ENCODE measurements at regions of chr1 and their contacts with region 1.

Region 1: GRCh38 chr1:175146529-175147213 is 45.9 kb downstream of the KIAA0040 start:
- ATAC-seq: peak; percentile 75 to 90 (median 88)
- H3K4me3 ChIP-seq: no peak overlapping the region
- H3K27ac ChIP-seq: no peak overlapping the region
- H3K4me1 ChIP-seq: peaks cover 3 to 7% of the 10 kb centered on the region in 2 donors

Region 2: DNA sequence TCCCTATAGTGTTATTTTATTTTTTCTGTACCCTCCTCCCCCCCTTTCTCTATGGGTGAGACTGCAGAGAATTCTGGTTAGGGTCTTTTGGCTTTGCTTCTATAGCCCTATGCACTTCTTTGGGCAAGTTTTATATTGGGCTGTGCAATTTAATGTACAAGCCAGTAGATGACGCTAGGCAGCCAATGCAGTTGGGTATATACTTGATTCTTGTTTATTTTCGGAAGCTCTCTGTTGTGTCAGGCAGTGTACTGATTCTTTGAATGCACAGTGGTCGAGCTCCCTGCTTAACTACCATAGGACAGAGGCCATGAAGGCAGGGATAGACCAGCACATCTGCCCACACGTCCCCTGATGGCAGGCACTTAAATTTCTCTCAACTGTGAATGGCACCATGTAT is 733.0 kb before region 1 on chr1:
- in situ Hi-C with region 1: no loop called
- ATAC-seq: peak in 2 of 8 experiments; percentile 59 to 85
- H3K4me3 ChIP-seq: no peak overlapping the region
- H3K27ac ChIP-seq: no peak overlapping the region
- H3K4me1 ChIP-seq: no peaks in the 10 kb centered on the region

Region 3: DNA sequence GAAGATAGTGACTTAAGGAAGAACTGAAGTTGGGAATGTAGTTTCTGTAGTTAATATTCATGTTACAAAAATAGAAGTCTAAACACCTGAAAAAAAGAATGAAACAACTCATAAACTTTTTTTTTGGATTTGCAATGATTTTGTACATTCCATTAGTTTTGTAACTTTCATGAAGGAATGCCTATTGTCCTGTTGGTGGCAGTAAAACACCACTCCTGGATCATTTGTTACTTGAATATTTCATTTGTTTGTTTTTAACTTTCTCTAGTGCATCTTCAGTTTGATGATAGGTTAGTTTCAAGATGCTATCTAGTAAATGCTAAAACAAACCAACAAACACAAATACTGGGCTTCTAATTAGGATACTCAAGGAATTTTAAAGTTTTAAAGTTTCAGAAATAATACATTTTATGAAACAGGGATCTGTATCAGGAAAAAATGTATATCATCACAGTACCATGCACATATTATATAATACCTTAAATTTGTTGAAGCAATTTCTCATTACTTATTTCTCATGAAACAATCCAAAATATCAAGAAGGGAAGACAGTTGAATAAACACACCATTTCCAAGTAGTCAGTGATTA is 376.6 kb before region 1 on chr1:
- in situ Hi-C with region 1: loop called in 1 of 9 experiments (anchors 25 kb)
- ATAC-seq: peak in 4 of 8 experiments; percentile 47 to 63 (median 50)
- H3K4me3 ChIP-seq: no peak overlapping the region
- H3K27ac ChIP-seq: no peak overlapping the region
- H3K4me1 ChIP-seq: no peaks in the 10 kb centered on the region

Region 4: DNA sequence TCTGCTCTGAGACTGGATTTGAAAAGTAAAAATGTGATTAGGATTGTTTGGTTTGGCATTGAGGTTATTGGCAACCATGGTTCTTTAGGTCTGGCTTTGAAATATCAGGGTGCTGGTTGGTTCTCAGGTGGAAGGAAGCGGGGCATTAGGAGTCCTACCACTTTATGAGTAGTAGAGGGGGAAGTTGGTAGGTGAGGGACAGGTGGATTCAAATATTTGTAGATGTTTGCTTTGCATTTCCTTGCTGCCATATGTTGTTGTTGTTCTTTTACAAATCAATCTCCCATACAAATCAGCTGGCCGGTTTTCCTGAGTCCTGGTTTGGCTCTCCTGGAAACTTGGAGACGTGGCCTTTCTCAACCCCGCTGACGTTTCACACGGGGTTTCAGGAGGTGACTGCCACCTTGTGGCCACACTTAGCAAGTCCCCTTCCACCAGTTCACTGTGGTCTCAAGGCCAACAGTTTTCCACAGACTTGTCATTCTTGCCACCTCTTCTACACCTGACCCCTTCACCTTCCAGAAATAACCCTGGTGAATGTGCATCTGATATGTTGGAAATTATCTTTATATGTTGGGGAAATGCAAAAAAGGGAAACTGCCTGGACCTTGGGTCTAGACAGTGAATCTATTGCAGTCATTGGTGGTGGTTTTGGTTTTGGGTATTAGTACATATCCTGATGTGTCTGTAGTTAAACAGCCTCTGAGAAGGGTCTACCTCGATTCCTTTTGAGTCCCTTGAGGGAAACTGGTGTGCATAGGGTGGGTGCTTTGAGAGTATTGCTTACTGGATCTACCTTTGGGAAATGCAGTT is 173.0 kb after region 1 on chr1:
- in situ Hi-C with region 1: loop called in 4 of 9 experiments (anchors 10 to 25 kb)
- ATAC-seq: peak; percentile 60 to 99 (median 80)
- H3K4me3 ChIP-seq: no peak overlapping the region
- H3K27ac ChIP-seq: no peak overlapping the region
- H3K4me1 ChIP-seq: no peaks in the 10 kb centered on the region

Measured in motor neuron (in vitro differentiated cells).